ENCODE measurements at regions of chr19 and their contacts with region 1.

Region 1: GRCh38 chr19:3626473-3627350 is at the start of gene CACTIN:
- DNase-seq: peak; percentile 99
- ATAC-seq: peak; percentile 98
- H3K4me3 Mint-ChIP-seq: peak within 1 kb of the TSS; percentile 91
- H3K27ac Mint-ChIP-seq: peak within 1 kb of the TSS; percentile 82
- H3K4me1 Mint-ChIP-seq: peaks cover 22% of the 10 kb centered on the region
- H3K27me3 Mint-ChIP-seq: no peaks in the 10 kb centered on the region
- total RNA-seq, gene CACTIN: 28.0 to 33.6 TPM

Region 2: GRCh38 chr19:3284759-3285646 is 341.7 kb before region 1 on chr19:
- CTCF ChIA-PET with region 1: no interaction called
- POLR2A ChIA-PET with region 1: no interaction called
- intact Hi-C with region 1: loop called in 1 of 2 experiments (anchors 1 kb)
- DNase-seq: peak; percentile 94
- ATAC-seq: peak; percentile 91
- H3K4me3 Mint-ChIP-seq: peak overlapping the region; percentile 51
- H3K27ac Mint-ChIP-seq: no peak overlapping the region
- H3K4me1 Mint-ChIP-seq: peaks cover 12% of the 10 kb centered on the region
- H3K27me3 Mint-ChIP-seq: peaks cover 19% of the 10 kb centered on the region

Region 3: GRCh38 chr19:3544742-3545668 is 81.7 kb before region 1 on chr19:
- CTCF ChIA-PET with region 1: no interaction called
- POLR2A ChIA-PET with region 1: no interaction called
- intact Hi-C with region 1: loop called in 1 of 2 experiments (anchors 1 kb)
- DNase-seq: peak; percentile 90
- ATAC-seq: peak; percentile 84
- H3K4me3 Mint-ChIP-seq: no peak overlapping the region
- H3K27ac Mint-ChIP-seq: peak overlapping the region; percentile 58
- H3K4me1 Mint-ChIP-seq: peaks cover 6% of the 10 kb centered on the region
- H3K27me3 Mint-ChIP-seq: no peaks in the 10 kb centered on the region

Region 4: GRCh38 chr19:3700221-3701032 is 73.7 kb after region 1 on chr19 and contains the start of gene PIP5K1C:
- CTCF ChIA-PET with region 1: no interaction called
- POLR2A ChIA-PET with region 1: no interaction called
- intact Hi-C with region 1: loop called in 1 of 2 experiments (anchors 1 kb)
- DNase-seq: peak; percentile 97
- ATAC-seq: peak; percentile 95
- H3K4me3 Mint-ChIP-seq: peak within 1 kb of the TSS; percentile 87
- H3K27ac Mint-ChIP-seq: peak within 1 kb of the TSS; percentile 80
- H3K4me1 Mint-ChIP-seq: peaks cover 17% of the 10 kb centered on the region
- H3K27me3 Mint-ChIP-seq: no peaks in the 10 kb centered on the region
- total RNA-seq, gene PIP5K1C: 14.6 to 15.3 TPM

Region 5: DNA sequence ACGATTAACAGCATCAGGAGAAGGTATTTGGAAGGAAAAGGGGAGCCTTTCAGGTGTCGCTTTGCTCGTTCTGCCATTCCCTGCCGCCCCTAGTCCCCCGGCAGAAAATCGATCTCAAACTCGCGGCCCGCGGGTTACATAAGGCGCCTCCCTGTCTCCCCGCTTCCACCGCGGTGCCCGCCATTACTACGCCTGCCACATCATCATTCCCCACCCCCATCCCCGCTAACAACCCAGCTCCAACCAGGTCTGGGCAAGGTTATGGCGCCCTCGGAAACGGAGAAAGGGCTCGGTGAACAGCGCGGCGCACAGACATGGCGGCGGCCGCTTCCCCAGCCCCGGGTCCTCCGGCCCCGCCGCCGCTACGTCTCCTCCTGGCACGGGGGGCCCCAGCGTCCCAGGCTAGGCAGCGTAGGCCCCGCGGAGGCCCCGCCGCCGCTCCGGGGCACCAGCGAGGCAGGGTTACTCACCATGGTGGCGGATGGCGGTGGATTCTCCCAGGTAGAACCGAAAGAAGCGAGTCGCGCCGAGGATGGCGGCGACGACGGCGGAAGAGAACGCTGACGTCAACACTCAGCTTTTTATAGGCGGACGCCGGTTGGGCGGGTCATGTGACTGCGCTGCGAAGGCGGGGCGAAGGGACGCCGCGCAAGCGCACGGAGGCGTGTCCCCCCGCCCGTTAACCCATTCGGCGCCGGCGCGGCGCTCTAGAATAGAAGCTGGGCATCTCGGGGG is 358.4 kb after region 1 on chr19 and contains the start of gene EEF2:
- CTCF ChIA-PET with region 1: no interaction called
- POLR2A ChIA-PET with region 1: no interaction called
- intact Hi-C with region 1: loop called in 1 of 2 experiments (anchors 2 kb)
- DNase-seq: peak; percentile 94
- ATAC-seq: peak; percentile 45
- H3K4me3 Mint-ChIP-seq: peak within 1 kb of the TSS; percentile 87
- H3K27ac Mint-ChIP-seq: peak within 1 kb of the TSS; percentile 94
- H3K4me1 Mint-ChIP-seq: peaks cover 52% of the 10 kb centered on the region
- H3K27me3 Mint-ChIP-seq: no peaks in the 10 kb centered on the region
- total RNA-seq, gene EEF2: 3,116 to 3,255 TPM

Region 6: GRCh38 chr19:4182084-4182810 is 555.5 kb after region 1 on chr19 and contains the starts of genes ANKRD24 and SIRT6:
- CTCF ChIA-PET with region 1: no interaction called
- POLR2A ChIA-PET with region 1: no interaction called
- intact Hi-C with region 1: loop called in 1 of 2 experiments (anchors 1 kb)
- DNase-seq: peak; percentile 98
- ATAC-seq: peak; percentile 84
- H3K4me3 Mint-ChIP-seq: peak within 1 kb of the TSS; percentile 92
- H3K27ac Mint-ChIP-seq: peak within 1 kb of the TSS; percentile 93
- H3K4me1 Mint-ChIP-seq: peaks cover 30% of the 10 kb centered on the region
- H3K27me3 Mint-ChIP-seq: no peaks in the 10 kb centered on the region
- total RNA-seq, gene ANKRD24: 1.1 to 1.3 TPM
- total RNA-seq, gene SIRT6: 26.2 to 29.4 TPM

Region 7: DNA sequence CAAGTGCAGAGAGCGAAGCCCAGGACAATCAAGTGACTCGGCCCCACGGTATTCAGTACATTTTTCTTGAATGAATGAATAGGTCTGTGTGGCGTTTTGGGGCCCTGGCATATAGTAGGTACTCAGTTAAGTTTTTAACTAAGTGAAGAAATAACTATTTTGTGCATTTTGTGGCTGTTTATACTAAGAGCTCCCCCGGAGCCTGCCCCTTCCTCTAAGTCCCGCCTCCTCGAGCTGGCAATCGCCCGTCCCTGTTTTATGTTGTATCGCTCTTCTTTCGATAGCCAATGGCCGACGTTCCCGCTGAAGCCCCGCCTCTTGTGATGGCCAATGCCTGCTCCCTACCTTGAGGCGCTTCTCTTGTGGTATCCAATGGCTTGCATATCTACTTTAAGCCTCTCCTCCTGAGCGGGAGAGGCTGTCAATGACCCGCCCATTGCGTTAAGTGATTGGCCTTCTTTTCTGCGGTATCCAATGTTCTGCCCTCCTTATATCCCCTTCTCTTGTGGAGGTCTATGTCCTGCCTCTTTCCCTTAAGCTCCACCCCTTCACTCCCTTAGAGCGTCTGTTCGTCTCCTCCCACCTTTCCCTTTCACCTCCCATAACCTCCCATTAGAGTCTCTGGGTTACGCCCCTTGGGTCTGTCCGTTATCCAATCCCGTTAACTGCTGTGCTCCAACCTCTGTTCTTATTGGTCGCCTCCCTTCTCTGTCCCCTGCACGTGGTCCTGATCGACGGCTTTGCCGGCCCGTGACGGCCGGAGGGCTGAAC is 844.9 kb after region 1 on chr19:
- CTCF ChIA-PET with region 1: no interaction called
- POLR2A ChIA-PET with region 1: no interaction called
- intact Hi-C with region 1: loop called in 1 of 2 experiments (anchors 5 kb)
- DNase-seq: peak; percentile 98
- ATAC-seq: peak; percentile 90
- H3K4me3 Mint-ChIP-seq: no peak overlapping the region
- H3K27ac Mint-ChIP-seq: no peak overlapping the region
- H3K4me1 Mint-ChIP-seq: peaks cover 21% of the 10 kb centered on the region
- H3K27me3 Mint-ChIP-seq: no peaks in the 10 kb centered on the region